Activated naive CD4-positive, alpha-beta T cell treated with anti-CD3 and anti-CD28 coated beads for 36 hours (primary cell): ENCODE measurements at regions of chr3 and their contacts with region 1.

Region 1: DNA sequence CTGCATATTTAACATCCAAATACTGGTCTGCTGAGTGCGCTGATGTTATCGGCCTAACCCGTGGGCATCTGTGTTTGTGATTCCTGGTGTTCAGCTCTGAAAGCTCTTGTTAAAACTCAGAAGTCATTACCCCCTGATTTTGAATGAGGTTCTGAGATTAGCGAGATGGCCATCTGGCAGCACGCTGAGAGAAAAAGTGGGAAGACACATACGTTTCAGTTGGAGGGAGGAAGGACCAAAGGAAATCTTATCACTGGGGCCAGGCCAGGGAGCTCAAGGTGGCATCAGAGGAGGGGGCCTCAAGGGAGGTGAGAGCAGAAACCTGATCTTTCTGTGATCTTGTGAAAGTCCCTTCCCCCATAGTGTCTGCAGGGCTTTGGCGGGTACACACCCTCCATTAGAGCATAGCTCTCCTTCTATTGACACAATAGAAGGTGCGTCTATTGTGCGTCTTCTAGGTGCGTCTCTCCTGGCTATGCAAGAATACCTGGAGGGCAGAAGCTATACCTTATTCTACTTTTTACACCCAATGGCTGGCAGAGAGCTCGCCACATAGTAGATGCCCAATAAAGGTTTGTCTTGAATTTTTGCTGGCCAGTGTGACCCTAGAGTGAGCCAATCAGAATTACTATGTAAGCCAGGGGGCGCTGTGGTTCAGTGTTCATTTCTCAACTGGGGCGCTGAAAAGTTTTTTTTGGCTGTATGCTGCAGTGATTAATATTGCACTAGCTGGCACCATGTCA is 182.4 kb downstream of the SHQ1 start:
- DNase-seq: peak; percentile 81
- H3K4me3 Mint-ChIP-seq: no peak overlapping the region
- H3K27ac Mint-ChIP-seq: no peak overlapping the region
- H3K4me1 Mint-ChIP-seq: no peaks in the 10 kb centered on the region
- H3K27me3 Mint-ChIP-seq: no peaks in the 10 kb centered on the region

Region 2: DNA sequence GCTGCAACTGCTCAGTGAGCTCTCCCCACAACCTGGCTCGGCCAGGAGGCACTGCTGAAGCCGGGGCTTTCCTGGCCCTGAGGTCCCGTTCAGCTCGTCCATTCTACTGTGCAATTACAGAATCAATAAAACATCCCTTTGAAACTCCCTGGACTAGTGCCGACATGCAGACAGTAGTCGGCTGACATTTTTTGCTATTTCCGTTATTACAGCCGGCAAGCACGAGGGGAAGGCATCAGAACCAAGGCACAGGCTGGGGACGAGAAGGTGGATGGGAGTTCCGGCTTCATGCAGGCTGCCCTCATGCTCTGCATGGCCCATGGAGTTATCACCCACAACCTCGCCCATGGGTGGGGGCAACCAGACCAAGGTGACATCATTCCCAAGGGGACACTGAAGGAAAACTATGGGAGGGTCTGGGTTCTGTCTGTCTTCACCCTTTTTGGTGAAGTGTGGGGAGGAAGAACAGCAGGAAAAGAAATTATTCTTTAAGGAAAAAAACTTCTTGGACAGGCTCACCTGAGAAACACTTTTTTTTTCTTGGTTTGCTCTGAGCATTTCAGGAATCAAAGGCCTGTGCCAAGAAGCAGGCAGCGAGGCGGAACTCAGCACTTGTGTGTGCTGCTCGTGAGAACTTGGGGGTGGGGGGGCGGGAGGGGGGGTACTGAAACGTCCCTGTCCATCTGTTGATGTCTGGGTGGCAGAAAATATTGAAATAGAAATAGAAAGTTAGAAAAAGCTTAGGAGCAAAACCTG is 1236.9 kb before region 1 on chr3:
- CTCF ChIA-PET with region 1: no interaction called
- intact Hi-C with region 1: no loop called
- DNase-seq: no peak
- H3K4me3 Mint-ChIP-seq: peak overlapping the region; percentile 60
- H3K27ac Mint-ChIP-seq: peak overlapping the region; percentile 85
- H3K4me1 Mint-ChIP-seq: peaks cover 91% of the 10 kb centered on the region
- H3K27me3 Mint-ChIP-seq: no peaks in the 10 kb centered on the region

Region 3: GRCh38 chr3:72462595-72463011 is 203.3 kb before region 1 on chr3:
- CTCF ChIA-PET with region 1: no interaction called
- intact Hi-C with region 1: no loop called
- DNase-seq: no peak
- H3K4me3 Mint-ChIP-seq: no peak overlapping the region
- H3K27ac Mint-ChIP-seq: no peak overlapping the region
- H3K4me1 Mint-ChIP-seq: no peaks in the 10 kb centered on the region
- H3K27me3 Mint-ChIP-seq: peaks cover 14% of the 10 kb centered on the region

Region 4: DNA sequence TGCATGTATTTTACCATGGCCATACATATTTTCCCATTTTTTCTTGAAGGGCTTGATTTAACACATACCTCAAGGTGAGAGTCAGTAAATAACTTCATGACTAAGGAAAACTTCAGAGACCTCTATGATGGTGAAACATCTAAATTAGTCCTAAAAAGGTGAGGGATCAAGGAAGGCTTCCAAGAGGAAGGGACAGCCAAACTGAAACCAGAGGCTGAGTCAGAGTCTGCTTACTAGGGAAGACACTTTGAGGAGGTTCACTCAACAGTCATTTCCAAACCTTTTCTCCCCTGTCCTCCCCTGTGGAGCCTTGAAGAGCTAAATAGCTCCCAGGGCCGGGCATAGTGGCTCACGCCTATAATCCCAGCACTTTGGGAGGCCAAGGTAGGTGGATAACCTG is 24.2 kb before region 1 on chr3:
- CTCF ChIA-PET with region 1: interaction called, 15 read pairs
- intact Hi-C with region 1: no loop called
- DNase-seq: no peak
- H3K4me3 Mint-ChIP-seq: no peak overlapping the region
- H3K27ac Mint-ChIP-seq: no peak overlapping the region
- H3K4me1 Mint-ChIP-seq: peaks cover 5% of the 10 kb centered on the region
- H3K27me3 Mint-ChIP-seq: peaks cover 12% of the 10 kb centered on the region